H1 (cell line): ENCODE measurements at regions of chr5 and their contacts with region 1.

Region 1: GRCh38 chr5:94740286-94740685 is 121.8 kb downstream of the SLF1 start:
- DNase-seq: no peak
- H3K4me3 ChIP-seq: no peak overlapping the region
- H3K27ac ChIP-seq: no peak overlapping the region
- H3K4me1 ChIP-seq: peaks cover 0 to 4% (median 2%) of the 10 kb centered on the region in 4 experiments; a peak in 2 of 7 replicates
- H3K27me3 ChIP-seq: no peaks in the 10 kb centered on the region
- CTCF ChIP-seq: no peak
- EP300 ChIP-seq: no peak
- POLR2A ChIP-seq: no peak
- RAD21 ChIP-seq: no peak

Region 2: DNA sequence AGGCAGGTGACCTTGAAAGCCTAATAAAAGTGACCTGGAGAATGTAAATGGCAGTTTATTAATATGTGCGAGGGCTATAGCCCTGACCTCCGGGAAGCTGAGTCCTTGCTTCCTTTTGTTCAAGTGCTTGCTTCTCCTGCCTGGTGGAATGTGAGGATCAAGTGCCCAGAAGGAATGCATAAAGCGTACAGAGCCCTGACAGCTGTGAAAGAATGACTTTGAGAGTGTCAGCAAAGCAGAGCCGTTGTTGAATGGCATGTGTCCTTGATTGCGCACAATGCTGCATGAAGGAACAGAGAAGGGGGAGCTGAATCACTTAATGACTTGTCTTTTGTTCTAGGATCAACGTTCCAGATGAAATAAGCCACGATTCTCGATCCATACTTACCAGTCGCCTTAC is 11.2 kb after region 1 on chr5:
- CTCF ChIA-PET with region 1: interaction called, 17 read pairs
- POLR2A ChIA-PET with region 1: no interaction called
- DNase-seq: no peak
- H3K4me3 ChIP-seq: no peak overlapping the region
- H3K27ac ChIP-seq: no peak overlapping the region
- H3K4me1 ChIP-seq: peaks cover 0 to 3% (median 0%) of the 10 kb centered on the region in 4 experiments; a peak in 1 of 7 replicates
- H3K27me3 ChIP-seq: no peaks in the 10 kb centered on the region
- CTCF ChIP-seq: no peak
- EP300 ChIP-seq: no peak
- POLR2A ChIP-seq: no peak
- RAD21 ChIP-seq: no peak